ENCODE measurements at regions of chr1 and their contacts with region 1.

Region 1: DNA sequence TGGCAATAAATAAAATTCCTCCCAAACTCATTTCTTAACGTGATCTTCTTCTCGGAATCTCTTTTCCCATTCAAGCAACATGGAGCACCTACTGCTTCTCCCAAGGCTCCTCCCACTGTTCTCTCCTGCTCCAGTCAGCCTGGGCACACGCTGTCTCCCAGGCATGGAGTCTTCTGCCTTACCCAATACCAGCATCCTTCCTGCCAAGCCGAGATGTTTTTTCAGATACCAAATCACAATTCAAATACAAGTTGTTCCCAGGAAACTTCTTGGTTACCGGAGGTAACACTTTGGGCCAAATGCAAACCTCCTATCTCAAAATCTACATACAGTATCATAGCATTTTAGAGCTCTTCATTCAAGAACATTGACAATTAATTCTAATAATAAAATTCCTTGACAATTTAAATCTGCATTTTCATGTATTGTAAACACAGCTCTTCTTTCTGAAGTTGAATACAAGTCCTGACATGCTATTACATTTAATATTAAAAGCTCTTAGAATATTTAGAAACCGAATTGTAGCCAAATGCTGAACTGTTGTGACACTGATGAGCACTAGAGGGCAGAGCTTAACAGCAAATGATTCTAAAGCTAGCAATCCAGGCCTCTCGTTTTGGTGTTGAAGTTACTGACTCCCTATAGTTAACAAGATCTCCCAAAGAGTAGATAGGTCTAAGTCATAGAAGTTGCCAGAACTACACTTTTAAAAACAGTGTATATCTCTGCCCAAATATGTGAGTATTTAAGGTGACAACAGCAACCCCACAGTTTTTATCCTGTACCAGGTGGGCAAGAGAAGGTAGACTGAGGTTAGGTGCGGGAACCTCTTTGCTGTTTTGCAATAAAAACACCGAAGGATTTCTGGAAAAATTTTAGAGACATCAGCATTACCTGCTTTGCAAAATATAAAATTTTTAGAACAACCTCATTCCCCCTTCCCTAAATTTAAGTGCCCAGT is 52.3 kb downstream of the BCAR3 start:
- DNase-seq: peak; percentile 76
- H3K4me3 ChIP-seq: no peak overlapping the region
- H3K27ac ChIP-seq: no peak overlapping the region
- H3K4me1 ChIP-seq: no peaks in the 10 kb centered on the region
- H3K27me3 ChIP-seq: no peaks in the 10 kb centered on the region
- CTCF ChIP-seq: peak; percentile 88

Region 2: GRCh38 chr1:93114391-93114790 is 515.0 kb before region 1 on chr1:
- CTCF ChIA-PET with region 1: no interaction called
- POLR2A ChIA-PET with region 1: no interaction called
- intact Hi-C with region 1: no loop called
- DNase-seq: no peak
- H3K4me3 ChIP-seq: no peak overlapping the region
- H3K27ac ChIP-seq: no peak overlapping the region
- H3K4me1 ChIP-seq: peaks cover 11% of the 10 kb centered on the region
- H3K27me3 ChIP-seq: no peaks in the 10 kb centered on the region
- CTCF ChIP-seq: no peak

Region 3: GRCh38 chr1:93304716-93305138 is 324.7 kb before region 1 on chr1:
- CTCF ChIA-PET with region 1: no interaction called
- POLR2A ChIA-PET with region 1: no interaction called
- intact Hi-C with region 1: loop called (anchors 10 kb)
- DNase-seq: peak; percentile 78
- H3K4me3 ChIP-seq: no peak overlapping the region
- H3K27ac ChIP-seq: no peak overlapping the region
- H3K4me1 ChIP-seq: no peaks in the 10 kb centered on the region
- H3K27me3 ChIP-seq: no peaks in the 10 kb centered on the region
- CTCF ChIP-seq: peak; percentile 94

Region 4: GRCh38 chr1:93814059-93814794 is 184.8 kb after region 1 on chr1:
- CTCF ChIA-PET with region 1: interaction called, 55 read pairs
- POLR2A ChIA-PET with region 1: no interaction called
- intact Hi-C with region 1: loop called (anchors 1 kb)
- DNase-seq: peak; percentile 75
- H3K4me3 ChIP-seq: no peak overlapping the region
- H3K27ac ChIP-seq: no peak overlapping the region
- H3K4me1 ChIP-seq: peaks cover 18% of the 10 kb centered on the region
- H3K27me3 ChIP-seq: no peaks in the 10 kb centered on the region
- CTCF ChIP-seq: peak; percentile 85

Region 5: DNA sequence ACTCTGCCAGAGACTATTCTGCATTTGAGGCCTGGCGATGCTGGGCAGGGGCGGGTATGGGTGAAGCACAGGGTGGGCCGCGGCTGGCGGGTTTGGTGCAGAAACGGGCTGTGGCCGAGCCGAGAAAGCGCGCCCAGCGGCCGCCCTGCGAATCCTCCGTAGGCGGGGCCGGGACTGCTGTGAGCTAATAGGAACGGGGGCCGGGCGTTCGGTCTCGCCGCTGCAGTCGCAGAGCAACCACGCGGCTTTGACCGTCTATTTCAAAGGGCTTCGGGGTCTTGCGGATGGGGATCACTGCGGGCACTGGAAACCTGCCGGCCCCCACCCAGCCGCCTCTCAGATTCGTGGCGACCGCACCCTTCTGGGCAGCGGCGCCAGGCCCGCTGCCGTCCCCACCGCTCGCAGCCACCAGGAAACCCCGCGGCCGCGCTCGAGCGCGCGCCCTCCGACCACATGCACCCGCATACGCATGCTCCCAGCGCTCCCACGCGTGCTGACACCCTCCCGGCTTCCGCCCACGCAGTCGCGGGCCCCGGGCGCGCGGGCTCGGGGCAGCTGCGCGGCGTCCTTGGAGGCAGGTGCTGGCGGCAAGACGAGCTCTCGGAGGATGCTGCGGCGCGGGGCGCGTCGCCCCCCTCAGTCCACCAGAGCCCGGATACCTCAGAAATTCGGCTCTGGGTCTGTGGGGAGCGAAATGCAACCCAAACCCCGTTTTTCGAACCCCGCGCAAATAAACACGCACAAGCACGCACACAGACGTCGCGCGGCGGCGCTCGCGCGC is 217.0 kb after region 1 on chr1:
- CTCF ChIA-PET with region 1: interaction called, 26 read pairs
- POLR2A ChIA-PET with region 1: interaction called, 3 read pairs
- intact Hi-C with region 1: loop called (anchors 1 kb)
- DNase-seq: peak; percentile 93
- H3K4me3 ChIP-seq: peak overlapping the region; percentile 96
- H3K27ac ChIP-seq: peak overlapping the region; percentile 91
- H3K4me1 ChIP-seq: peaks cover 6% of the 10 kb centered on the region
- H3K27me3 ChIP-seq: no peaks in the 10 kb centered on the region
- CTCF ChIP-seq: peak; percentile 39

Region 6: DNA sequence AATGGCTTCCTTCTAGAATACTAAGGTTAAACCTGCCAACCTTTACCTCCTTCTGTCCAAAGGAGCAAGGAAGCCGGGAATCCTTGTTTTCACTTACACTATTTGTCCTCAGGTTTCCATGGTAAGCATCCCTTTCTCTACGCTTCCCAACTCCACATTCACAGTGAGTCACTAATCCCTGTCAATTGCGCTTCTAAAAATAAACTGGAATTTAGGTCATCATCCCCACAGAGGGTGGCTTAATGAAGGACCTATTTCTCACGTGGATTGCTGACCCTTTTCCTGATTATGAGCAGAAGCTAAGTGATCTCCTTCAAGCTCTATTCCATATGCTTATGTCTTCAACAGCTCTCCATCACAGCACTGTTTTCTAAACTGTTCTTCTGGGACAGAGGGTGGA is 531.4 kb after region 1 on chr1:
- CTCF ChIA-PET with region 1: no interaction called
- POLR2A ChIA-PET with region 1: no interaction called
- intact Hi-C with region 1: no loop called
- DNase-seq: peak; percentile 32
- H3K4me3 ChIP-seq: no peak overlapping the region
- H3K27ac ChIP-seq: no peak overlapping the region
- H3K4me1 ChIP-seq: no peaks in the 10 kb centered on the region
- H3K27me3 ChIP-seq: no peaks in the 10 kb centered on the region
- CTCF ChIP-seq: no peak